PC-9 (cell line): ENCODE measurements at regions of chr11 and their contacts with region 1.

Region 1: DNA sequence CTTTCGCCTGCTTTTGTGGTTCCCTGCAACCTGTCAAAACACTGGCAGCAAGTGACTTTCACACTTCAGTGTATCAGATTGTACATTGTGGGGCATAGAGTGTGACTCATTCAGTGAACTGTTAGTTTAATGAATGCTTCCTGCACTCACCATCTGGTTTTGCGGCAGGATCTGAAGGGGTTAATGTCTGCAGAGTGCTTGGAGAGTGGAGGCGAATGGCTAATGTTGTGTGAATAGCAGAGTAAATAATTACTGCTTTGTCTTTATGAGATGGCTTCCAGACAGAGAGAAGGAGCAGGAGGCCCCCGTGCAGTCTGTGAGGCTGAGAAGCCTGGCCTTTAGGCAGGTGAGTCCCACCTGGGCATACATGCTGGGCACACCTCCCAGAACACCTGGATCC is 454.3 kb upstream of the KIRREL3 start:
- DNase-seq: no peak
- H3K4me3 ChIP-seq: no peak overlapping the region
- H3K27ac ChIP-seq: no peak overlapping the region
- H3K4me1 ChIP-seq: no peaks in the 10 kb centered on the region
- H3K27me3 ChIP-seq: peaks cover 5% of the 10 kb centered on the region; the same call in 1 of the 2 replicates
- CTCF ChIP-seq: no peak

Region 2: GRCh38 chr11:126585781-126586491 is 868.9 kb before region 1 on chr11:
- CTCF ChIA-PET with region 1: interaction called, 15 read pairs
- POLR2A ChIA-PET with region 1: no interaction called
- intact Hi-C with region 1: no loop called
- DNase-seq: peak; percentile 45 to 62
- H3K4me3 ChIP-seq: no peak overlapping the region
- H3K27ac ChIP-seq: no peak overlapping the region
- H3K4me1 ChIP-seq: no peaks in the 10 kb centered on the region
- H3K27me3 ChIP-seq: peaks cover 92% of the 10 kb centered on the region
- CTCF ChIP-seq: no peak